Right ventricle myocardium superior (tissue), 1 donor: ENCODE measurements at regions of chr11 and their contacts with region 1.

Region 1: GRCh38 chr11:130448416-130449309 is at the start of gene ADAMTS15:
- DNase-seq: peak; percentile 94
- ATAC-seq: peak; percentile 79
- total RNA-seq, gene ADAMTS15: 43.5 TPM

Region 2: GRCh38 chr11:130359419-130359818 is 89.2 kb before region 1 on chr11:
- intact Hi-C with region 1: no loop called
- DNase-seq: no peak
- ATAC-seq: no peak

Region 3: DNA sequence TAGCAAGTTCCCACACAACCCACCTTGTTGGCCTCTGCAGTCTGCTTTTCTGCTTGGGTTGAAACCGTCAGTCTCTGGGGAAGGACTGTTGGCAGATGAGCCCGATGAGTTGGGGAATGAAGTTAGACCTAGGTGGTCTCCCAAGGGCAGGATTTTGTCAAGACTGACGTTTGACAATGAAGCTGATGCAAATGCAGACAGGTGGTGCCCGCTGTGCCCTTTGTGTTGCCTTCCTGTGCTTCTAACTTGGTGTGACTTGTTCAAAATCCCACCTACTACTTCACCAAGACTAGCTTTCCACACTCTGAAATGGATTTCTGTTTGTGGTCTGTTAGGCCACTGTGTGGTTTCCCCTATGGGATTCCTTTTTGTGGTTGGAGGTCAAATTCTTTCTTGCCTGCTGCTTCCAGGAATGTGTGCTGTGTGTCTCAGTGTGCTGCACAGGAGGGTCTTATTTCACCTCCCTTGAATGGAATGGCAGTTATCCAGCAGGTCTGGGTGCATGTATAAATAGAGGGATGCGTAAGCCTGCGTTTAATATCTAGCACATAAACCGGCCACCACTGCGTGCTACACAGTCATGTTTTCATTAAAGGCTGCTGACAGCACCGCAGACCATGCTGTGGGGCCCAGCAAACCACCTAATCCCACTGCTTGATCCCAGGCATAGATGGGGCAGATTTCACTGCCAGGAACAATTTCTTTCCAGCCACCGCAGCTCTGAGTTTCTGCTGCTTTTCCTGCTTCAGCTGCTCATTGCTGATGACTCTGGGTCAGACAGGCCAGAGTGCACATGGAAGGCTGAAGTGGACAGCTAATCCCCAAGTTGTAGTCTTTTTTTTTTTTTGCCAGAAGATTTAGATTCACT is 65.1 kb before region 1 on chr11:
- intact Hi-C with region 1: no loop called
- DNase-seq: no peak
- ATAC-seq: no peak

Region 4: GRCh38 chr11:130403271-130403804 is 45.3 kb before region 1 on chr11:
- intact Hi-C with region 1: no loop called
- DNase-seq: peak; percentile 65
- ATAC-seq: peak; percentile 79

Region 5: DNA sequence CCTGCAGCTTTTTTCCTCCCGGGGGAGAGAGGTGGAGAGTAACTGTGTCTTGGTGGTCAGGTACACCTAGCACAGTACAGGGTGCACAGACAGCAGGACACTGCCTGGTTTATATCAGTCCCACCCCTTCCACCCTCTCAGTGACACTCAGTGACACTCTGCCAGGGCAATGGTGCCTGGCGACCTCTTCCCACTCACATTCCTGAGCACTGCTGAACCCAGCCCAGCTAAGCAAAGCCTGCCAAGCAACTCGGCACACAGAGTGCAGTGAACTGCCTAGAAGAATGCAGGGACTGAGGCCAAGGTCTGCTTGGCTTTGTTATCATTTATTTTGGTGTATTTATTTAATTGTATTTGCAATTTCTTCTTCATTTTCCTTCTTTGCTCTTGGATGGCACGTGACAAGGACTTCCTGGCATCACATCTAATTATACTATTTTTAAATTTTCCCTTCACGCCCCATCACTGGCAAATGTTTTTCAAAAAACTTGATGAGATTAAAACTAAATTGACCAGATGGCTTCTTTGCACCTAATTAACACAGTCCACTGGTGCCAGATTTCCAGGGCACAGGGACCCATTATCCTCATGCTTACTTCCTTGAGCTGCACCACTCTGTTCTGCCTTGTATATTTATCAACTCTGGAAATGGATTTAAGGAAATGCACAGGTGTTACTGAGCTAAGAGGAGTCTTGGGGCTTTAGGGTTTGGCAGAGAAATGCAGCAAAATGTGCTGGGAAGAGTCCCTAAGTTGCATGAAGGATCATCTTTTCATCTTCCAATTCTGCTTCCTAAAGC is 205.4 kb after region 1 on chr11:
- intact Hi-C with region 1: loop called (anchors 5 kb)
- DNase-seq: peak; percentile 92
- ATAC-seq: peak; percentile 92

Region 6: GRCh38 chr11:130671801-130672700 is 223.4 kb after region 1 on chr11:
- intact Hi-C with region 1: loop called (anchors 5 kb)
- DNase-seq: peak; percentile 81
- ATAC-seq: peak; percentile 72

Region 7: GRCh38 chr11:130737866-130738431 is 289.3 kb after region 1 on chr11:
- intact Hi-C with region 1: loop called (anchors 10 kb)
- DNase-seq: peak; percentile 82
- ATAC-seq: peak; percentile 97